T-cell (primary cell): ENCODE measurements at regions of chr6 and their contacts with region 1.

Region 1: GRCh38 chr6:7252390-7252789 is 60.6 kb downstream of the SSR1 start:
- DNase-seq: no peak
- ATAC-seq: no peak
- H3K4me3 ChIP-seq: no peak overlapping the region
- H3K4me3 Mint-ChIP-seq: no peak overlapping the region
- H3K27ac ChIP-seq: no peak overlapping the region
- H3K27ac Mint-ChIP-seq: no peak overlapping the region
- H3K4me1 ChIP-seq: no peaks in the 10 kb centered on the region
- H3K4me1 Mint-ChIP-seq: no peaks in the 10 kb centered on the region
- H3K27me3 ChIP-seq: no peaks in the 10 kb centered on the region
- H3K27me3 Mint-ChIP-seq: no peaks in the 10 kb centered on the region

Region 2: GRCh38 chr6:7129784-7130569 is 122.4 kb before region 1 on chr6:
- CTCF ChIA-PET with region 1: interaction called in 1 of 2 experiments, 12 read pairs
- POLR2A ChIA-PET with region 1: no interaction called
- DNase-seq: peak in 2 of 35 experiments; percentile 18 to 20
- ATAC-seq: peak in 3 of 4 experiments; percentile 8 to 26 (median 23)
- H3K4me3 ChIP-seq: no peak overlapping the region
- H3K4me3 Mint-ChIP-seq: peak overlapping the region in 1 of 3 donors; percentile 77
- H3K27ac ChIP-seq: peak overlapping the region; percentile 14
- H3K27ac Mint-ChIP-seq: peak overlapping the region; percentile 88 to 90
- H3K4me1 ChIP-seq: peaks cover 36 to 52% of the 10 kb centered on the region in 2 experiments
- H3K4me1 Mint-ChIP-seq: peaks cover 79 to 86% (median 85%) of the 10 kb centered on the region in 3 donors
- H3K27me3 ChIP-seq: no peaks in the 10 kb centered on the region
- H3K27me3 Mint-ChIP-seq: no peaks in the 10 kb centered on the region

Region 3: GRCh38 chr6:7143476-7143974 is 108.9 kb before region 1 on chr6:
- CTCF ChIA-PET with region 1: no interaction called
- POLR2A ChIA-PET with region 1: interaction called in 1 of 2 experiments, 10 read pairs
- DNase-seq: no peak
- ATAC-seq: no peak
- H3K4me3 ChIP-seq: no peak overlapping the region
- H3K4me3 Mint-ChIP-seq: peak overlapping the region in 2 of 3 donors; percentile 63 to 77
- H3K27ac ChIP-seq: no peak overlapping the region
- H3K27ac Mint-ChIP-seq: peak overlapping the region in 1 of 2 donors; percentile 48
- H3K4me1 ChIP-seq: peaks cover 48 to 61% of the 10 kb centered on the region in 2 experiments
- H3K4me1 Mint-ChIP-seq: peaks cover 72 to 79% (median 78%) of the 10 kb centered on the region in 3 donors
- H3K27me3 ChIP-seq: no peaks in the 10 kb centered on the region
- H3K27me3 Mint-ChIP-seq: no peaks in the 10 kb centered on the region